ENCODE measurements at regions of chr12 and their contacts with region 1.

Region 1: DNA sequence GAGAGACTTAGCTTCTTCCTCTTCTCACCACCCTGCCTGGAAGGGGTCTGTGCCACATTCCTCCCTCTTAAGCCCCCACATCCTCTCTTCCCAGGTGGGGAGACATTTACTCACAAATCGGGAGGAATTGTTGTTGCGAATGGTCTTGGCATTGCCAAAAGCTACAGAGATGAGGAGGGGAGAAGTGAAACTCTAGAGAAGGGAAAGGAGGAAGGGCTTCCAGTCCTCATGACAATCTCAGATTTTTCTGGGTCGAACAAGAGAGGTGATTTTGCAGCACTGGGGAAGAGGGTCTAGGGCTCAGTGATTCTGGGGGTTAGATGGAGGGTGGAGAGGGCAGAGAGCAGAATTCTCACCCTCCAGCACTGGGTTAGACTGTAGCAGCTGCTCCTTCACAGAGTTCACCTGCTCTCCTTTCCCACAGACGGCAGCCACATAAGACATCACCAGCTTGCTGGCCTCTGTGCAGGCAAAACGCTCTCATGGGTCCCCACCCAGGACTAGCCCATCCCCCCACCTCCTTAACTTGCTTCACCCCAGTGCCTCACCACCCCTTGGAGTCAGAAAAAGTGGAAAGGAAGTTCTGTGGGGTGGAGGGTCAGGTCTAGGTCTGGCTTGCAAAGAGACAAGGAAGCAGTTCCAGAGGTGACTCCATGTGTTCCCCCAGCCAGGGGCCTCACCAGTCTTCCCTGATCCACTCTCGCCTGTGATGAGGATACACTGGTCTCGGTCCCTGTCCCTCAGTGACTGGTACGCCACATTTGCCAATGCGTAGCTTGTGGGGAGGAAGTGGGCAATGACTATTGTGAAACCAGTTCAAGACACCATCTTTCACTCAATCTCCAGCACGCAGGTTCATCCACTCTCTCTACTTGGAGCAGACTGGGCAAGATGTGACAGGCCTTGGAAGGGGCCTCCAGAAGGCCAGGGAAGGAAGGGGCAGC is 2.7 kb downstream of the MYO1A start:
- DNase-seq: peak; percentile 85
- H3K4me3 Mint-ChIP-seq: peak overlapping the region; percentile 65
- H3K27ac Mint-ChIP-seq: peak overlapping the region; percentile 87
- H3K4me1 Mint-ChIP-seq: peaks cover 34% of the 10 kb centered on the region
- H3K27me3 Mint-ChIP-seq: no peaks in the 10 kb centered on the region

Region 2: GRCh38 chr12:57012600-57013465 is 34.4 kb before region 1 on chr12:
- intact Hi-C with region 1: loop called (anchors 5 kb)
- DNase-seq: no peak
- H3K4me3 Mint-ChIP-seq: no peak overlapping the region
- H3K27ac Mint-ChIP-seq: peak overlapping the region; percentile 2
- H3K4me1 Mint-ChIP-seq: peaks cover 26% of the 10 kb centered on the region
- H3K27me3 Mint-ChIP-seq: peaks cover 17% of the 10 kb centered on the region

Region 3: DNA sequence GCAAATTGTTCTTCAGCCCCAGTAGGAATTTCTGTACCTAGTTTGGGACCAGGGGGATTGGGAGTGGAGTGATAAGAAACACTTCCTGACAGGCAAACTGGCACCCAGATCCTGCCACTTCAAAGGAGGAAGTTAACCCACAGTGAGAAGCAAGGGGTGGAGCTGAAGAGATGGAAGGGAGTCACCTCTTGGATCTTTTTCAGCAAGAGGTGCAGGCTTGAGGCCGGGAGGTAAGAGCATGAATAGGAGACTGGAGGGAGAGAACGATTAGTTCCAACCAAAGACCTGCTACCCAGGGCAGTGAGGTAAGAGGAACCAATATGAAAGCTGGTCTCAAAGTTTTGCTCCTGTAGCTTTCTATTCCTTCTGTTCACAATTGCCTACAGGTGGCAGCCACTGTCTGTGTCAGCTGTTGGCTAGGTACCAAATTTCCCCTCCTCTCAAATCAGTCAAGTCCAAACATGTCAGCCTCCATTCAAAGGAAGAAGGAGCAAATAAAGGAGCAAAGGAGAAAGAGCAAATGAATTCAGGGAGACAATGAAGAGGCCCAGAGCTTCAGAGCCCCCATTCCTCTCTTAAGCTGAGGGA is 16.0 kb before region 1 on chr12:
- intact Hi-C with region 1: loop called (anchors 2 kb)
- DNase-seq: peak; percentile 74
- H3K4me3 Mint-ChIP-seq: peak overlapping the region; percentile 0
- H3K27ac Mint-ChIP-seq: peak overlapping the region; percentile 31
- H3K4me1 Mint-ChIP-seq: peaks cover 29% of the 10 kb centered on the region
- H3K27me3 Mint-ChIP-seq: no peaks in the 10 kb centered on the region